K562 (cell line): ENCODE measurements at regions of chr1 and their contacts with region 1.

Region 1: DNA sequence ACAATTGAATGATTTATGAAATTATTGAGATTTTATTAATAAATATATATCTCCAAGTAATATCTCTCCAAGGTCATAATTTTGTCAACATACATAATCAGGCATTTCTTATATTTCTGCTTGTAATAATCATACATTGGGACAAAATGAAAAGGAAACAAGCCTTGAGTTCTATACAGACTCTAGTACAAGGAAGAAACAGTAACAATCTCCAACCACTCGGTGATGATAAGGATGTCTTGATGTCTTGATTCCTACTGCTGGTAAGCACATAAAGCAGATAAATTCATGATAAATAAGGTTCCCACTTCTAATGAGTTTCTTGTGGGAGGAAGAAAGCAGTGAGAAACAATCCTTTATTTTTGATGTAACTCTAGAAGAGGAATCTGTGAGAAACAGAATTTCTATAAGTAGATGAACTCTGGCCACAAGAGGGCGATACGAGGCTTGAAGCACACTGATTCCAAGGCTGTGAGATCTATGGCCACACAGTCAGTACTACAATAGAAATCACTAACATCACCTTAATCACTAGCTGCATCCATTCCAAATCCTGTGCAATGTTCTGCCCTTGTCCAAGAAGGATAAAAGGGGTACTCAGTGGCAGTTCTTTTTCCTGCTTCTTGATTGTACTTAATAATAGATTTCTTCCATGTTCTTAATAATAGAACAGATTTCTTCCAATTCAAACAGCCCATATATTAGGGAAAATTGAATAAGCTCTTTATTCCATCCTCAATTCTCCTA is 41.4 kb upstream of the LRRC8B start:
- DNase-seq: peak; percentile 42 to 85 (median 57)
- ATAC-seq: peak; percentile 96
- H3K4me3 ChIP-seq: no peak overlapping the region
- H3K27ac ChIP-seq: no peak overlapping the region
- H3K4me1 ChIP-seq: no peaks in the 10 kb centered on the region
- H3K27me3 ChIP-seq: no peaks in the 10 kb centered on the region; a peak in 1 of 5 replicates
- CTCF ChIP-seq: peak; percentile 76 to 79 (median 77)
- EP300 ChIP-seq: no peak
- POLR2A ChIP-seq: no peak
- RAD21 ChIP-seq: peak; percentile 72 to 90

Region 2: DNA sequence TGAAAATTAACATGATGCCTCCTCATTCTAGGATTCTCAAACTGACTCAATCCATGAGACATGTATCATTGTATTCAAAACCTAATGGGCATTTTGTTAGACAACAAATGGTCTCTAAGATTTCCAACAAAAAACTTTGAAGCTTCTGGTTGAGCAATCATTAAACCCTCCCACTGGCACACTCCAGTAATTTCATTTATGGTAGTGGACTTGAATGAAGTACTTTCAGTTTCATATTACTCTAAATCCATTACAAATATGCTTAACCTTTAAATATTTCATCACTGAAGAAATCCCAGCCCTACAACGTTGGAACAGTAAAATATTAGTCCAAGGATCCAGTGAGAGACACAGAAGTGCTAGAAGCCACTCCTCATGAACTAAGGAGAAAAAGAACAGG is 75.8 kb before region 1 on chr1:
- CTCF ChIA-PET with region 1: no interaction called
- POLR2A ChIA-PET with region 1: no interaction called
- in situ Hi-C with region 1: no loop called
- intact Hi-C with region 1: no loop called
- DNase-seq: no peak
- ATAC-seq: no peak
- H3K4me3 ChIP-seq: no peak overlapping the region
- H3K27ac ChIP-seq: no peak overlapping the region
- H3K4me1 ChIP-seq: no peaks in the 10 kb centered on the region
- H3K27me3 ChIP-seq: no peaks in the 10 kb centered on the region
- CTCF ChIP-seq: no peak
- EP300 ChIP-seq: no peak
- POLR2A ChIP-seq: no peak
- RAD21 ChIP-seq: no peak

Region 3: DNA sequence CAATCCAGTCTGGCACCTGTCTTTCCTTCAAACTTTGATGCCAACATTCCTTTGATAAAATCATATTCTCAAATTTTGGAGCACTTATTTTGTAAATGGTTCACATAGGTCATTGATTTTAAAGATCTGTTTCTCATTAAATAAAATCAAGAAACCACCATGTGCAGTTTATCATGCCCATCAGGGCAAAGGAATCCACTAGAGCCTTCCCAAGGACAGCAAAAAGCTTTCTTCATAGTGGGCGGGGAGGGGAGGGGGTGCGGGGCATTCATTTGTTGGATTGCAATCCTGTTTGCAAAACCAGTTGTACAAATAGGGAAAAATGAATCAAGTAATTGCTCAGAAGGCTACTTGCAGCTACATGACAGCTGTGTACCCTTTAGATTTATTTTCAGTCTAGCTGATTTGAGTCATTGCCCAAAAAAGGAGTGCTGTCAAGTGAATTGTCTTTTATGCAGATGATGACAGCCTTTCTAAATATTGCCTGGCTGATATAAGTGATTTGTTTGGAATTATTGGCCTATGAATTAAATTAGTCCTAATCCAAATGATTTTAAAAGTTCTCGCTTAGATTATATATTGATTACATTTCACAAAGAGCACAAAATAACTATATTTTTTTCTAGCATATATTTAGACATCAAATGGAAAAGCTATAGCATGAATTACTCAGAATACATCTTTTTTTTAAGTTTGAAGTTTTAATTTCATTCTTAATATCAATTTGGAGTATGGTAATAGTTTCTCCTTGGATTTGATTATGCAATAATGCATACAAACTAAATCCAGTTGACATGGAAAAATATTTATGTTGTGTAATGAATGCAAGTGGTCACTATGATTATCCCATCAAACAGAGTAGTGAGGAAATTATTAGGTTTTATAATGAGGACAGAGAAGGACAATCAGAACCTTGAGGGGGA is 64.6 kb after region 1 on chr1:
- CTCF ChIA-PET with region 1: no interaction called
- POLR2A ChIA-PET with region 1: interaction called, 4 read pairs
- in situ Hi-C with region 1: no loop called
- intact Hi-C with region 1: loop called (anchors 2 kb)
- DNase-seq: peak in 1 of 4 experiments; percentile 56
- ATAC-seq: peak; percentile 3; the same call in 1 of the 3 replicates
- H3K4me3 ChIP-seq: no peak overlapping the region
- H3K27ac ChIP-seq: peak overlapping the region; percentile 95
- H3K4me1 ChIP-seq: peaks cover 21 to 74% of the 10 kb centered on the region in 2 experiments
- H3K27me3 ChIP-seq: no peaks in the 10 kb centered on the region
- CTCF ChIP-seq: no peak
- EP300 ChIP-seq: no peak
- POLR2A ChIP-seq: no peak
- RAD21 ChIP-seq: no peak

Region 4: GRCh38 chr1:89598450-89599331 is 115.5 kb after region 1 on chr1:
- CTCF ChIA-PET with region 1: interaction called, 26 read pairs
- POLR2A ChIA-PET with region 1: no interaction called
- in situ Hi-C with region 1: loop called (anchors 5 kb)
- intact Hi-C with region 1: loop called (anchors 1 kb)
- DNase-seq: peak; percentile 49 to 56 (median 51)
- ATAC-seq: peak; percentile 89
- H3K4me3 ChIP-seq: no peak overlapping the region
- H3K27ac ChIP-seq: no peak overlapping the region
- H3K4me1 ChIP-seq: no peaks in the 10 kb centered on the region
- H3K27me3 ChIP-seq: no peaks in the 10 kb centered on the region
- CTCF ChIP-seq: peak; percentile 60 to 76 (median 69); a peak in 5 of 6 replicates
- EP300 ChIP-seq: no peak
- POLR2A ChIP-seq: peak; percentile 22
- RAD21 ChIP-seq: peak; percentile 70 to 83

Region 5: DNA sequence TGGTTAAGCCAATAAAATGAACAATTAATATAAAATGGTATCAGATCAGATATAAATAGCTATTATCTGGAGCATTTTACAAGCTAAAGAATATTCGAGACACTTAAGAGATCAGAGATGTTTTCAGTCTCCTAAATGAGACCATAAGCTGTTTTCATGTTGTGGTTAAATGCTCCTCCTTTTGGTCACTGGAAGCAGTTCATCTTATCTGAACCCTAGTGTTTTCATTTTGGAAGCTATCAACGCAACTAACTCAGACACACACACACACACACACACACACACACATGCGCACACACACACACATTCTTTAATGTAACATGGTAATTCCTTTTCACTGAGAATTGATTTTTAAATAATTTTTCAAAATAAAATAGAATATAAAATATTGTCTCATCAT is 139.7 kb after region 1 on chr1:
- CTCF ChIA-PET with region 1: interaction called, 4 read pairs
- POLR2A ChIA-PET with region 1: no interaction called
- in situ Hi-C with region 1: no loop called
- intact Hi-C with region 1: loop called (anchors 1 kb)
- DNase-seq: peak in 2 of 4 experiments; percentile 29 to 34
- ATAC-seq: peak; percentile 82
- H3K4me3 ChIP-seq: no peak overlapping the region
- H3K27ac ChIP-seq: no peak overlapping the region
- H3K4me1 ChIP-seq: 0 out of 5 replicates have a peak, but pooled peaks cover 0 to 3% of the 10 kb centered on the region in 2 experiments
- H3K27me3 ChIP-seq: no peaks in the 10 kb centered on the region
- CTCF ChIP-seq: peak; percentile 15 to 64 (median 23); a peak in 3 of 6 replicates
- EP300 ChIP-seq: no peak
- POLR2A ChIP-seq: no peak
- RAD21 ChIP-seq: peak; percentile 56 to 77

Region 6: DNA sequence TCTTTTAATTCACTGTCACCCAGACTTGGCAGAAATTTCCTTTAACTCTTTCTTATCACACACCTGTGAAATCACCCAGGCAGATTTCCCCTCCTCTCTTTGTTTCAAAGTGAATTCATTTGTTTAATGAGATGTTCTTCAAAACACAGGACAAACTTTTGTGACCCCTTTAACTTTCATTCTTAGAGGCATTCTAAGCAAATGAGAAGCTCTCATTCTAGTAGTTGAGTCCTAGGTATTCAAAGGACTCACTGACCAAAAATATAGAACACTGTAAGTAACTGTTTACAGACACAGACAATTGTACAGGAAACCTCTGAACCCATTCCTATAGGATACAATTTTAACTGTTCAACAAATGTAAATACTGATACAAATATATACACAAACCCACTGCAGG is 166.6 kb after region 1 on chr1:
- CTCF ChIA-PET with region 1: no interaction called
- POLR2A ChIA-PET with region 1: no interaction called
- in situ Hi-C with region 1: no loop called
- intact Hi-C with region 1: no loop called
- DNase-seq: no peak
- ATAC-seq: no peak
- H3K4me3 ChIP-seq: no peak overlapping the region
- H3K27ac ChIP-seq: no peak overlapping the region
- H3K4me1 ChIP-seq: peaks cover 0 to 6% of the 10 kb centered on the region in 2 experiments; a peak in 2 of 5 replicates
- H3K27me3 ChIP-seq: no peaks in the 10 kb centered on the region
- CTCF ChIP-seq: no peak
- EP300 ChIP-seq: no peak
- POLR2A ChIP-seq: no peak
- RAD21 ChIP-seq: no peak

Region 7: GRCh38 chr1:89670163-89670562 is 187.0 kb after region 1 on chr1:
- CTCF ChIA-PET with region 1: no interaction called
- POLR2A ChIA-PET with region 1: no interaction called
- in situ Hi-C with region 1: no loop called
- intact Hi-C with region 1: no loop called
- DNase-seq: no peak
- ATAC-seq: no peak
- H3K4me3 ChIP-seq: no peak overlapping the region
- H3K27ac ChIP-seq: no peak overlapping the region
- H3K4me1 ChIP-seq: peaks cover 0 to 6% of the 10 kb centered on the region in 2 experiments; a peak in 3 of 5 replicates
- H3K27me3 ChIP-seq: no peaks in the 10 kb centered on the region
- CTCF ChIP-seq: no peak
- EP300 ChIP-seq: no peak
- POLR2A ChIP-seq: no peak
- RAD21 ChIP-seq: no peak

Region 8: GRCh38 chr1:89762779-89763648 is 279.8 kb after region 1 on chr1:
- CTCF ChIA-PET with region 1: interaction called, 11 read pairs
- POLR2A ChIA-PET with region 1: no interaction called
- in situ Hi-C with region 1: loop called (anchors 10 kb)
- intact Hi-C with region 1: loop called (anchors 1 kb)
- DNase-seq: peak; percentile 88 to 92 (median 90)
- ATAC-seq: peak; percentile 100
- H3K4me3 ChIP-seq: peak overlapping the region; percentile 36
- H3K27ac ChIP-seq: peak overlapping the region; percentile 35; the same call in 1 of the 3 replicates
- H3K4me1 ChIP-seq: peaks cover 15 to 17% of the 10 kb centered on the region in 2 experiments
- H3K27me3 ChIP-seq: no peaks in the 10 kb centered on the region; a peak in 1 of 5 replicates
- CTCF ChIP-seq: peak; percentile 96 to 98 (median 97)
- EP300 ChIP-seq: peak; percentile 46; the same call in 1 of the 2 replicates
- POLR2A ChIP-seq: no peak
- RAD21 ChIP-seq: peak; percentile 98 to 99

Region 9: GRCh38 chr1:89953072-89953626 is 470.0 kb after region 1 on chr1:
- CTCF ChIA-PET with region 1: no interaction called
- POLR2A ChIA-PET with region 1: no interaction called
- in situ Hi-C with region 1: no loop called
- intact Hi-C with region 1: loop called (anchors 5 kb)
- DNase-seq: peak; percentile 37 to 84 (median 62)
- ATAC-seq: peak; percentile 97
- H3K4me3 ChIP-seq: no peak overlapping the region
- H3K27ac ChIP-seq: no peak overlapping the region; the same call in 2 of the 3 replicates
- H3K4me1 ChIP-seq: peaks cover 8 to 56% of the 10 kb centered on the region in 2 experiments; a peak in 4 of 5 replicates
- H3K27me3 ChIP-seq: no peaks in the 10 kb centered on the region
- CTCF ChIP-seq: peak; percentile 79 to 83 (median 80)
- EP300 ChIP-seq: peak; percentile 25; the same call in 1 of the 2 replicates
- POLR2A ChIP-seq: no peak
- RAD21 ChIP-seq: peak; percentile 92 to 94

Region 10: DNA sequence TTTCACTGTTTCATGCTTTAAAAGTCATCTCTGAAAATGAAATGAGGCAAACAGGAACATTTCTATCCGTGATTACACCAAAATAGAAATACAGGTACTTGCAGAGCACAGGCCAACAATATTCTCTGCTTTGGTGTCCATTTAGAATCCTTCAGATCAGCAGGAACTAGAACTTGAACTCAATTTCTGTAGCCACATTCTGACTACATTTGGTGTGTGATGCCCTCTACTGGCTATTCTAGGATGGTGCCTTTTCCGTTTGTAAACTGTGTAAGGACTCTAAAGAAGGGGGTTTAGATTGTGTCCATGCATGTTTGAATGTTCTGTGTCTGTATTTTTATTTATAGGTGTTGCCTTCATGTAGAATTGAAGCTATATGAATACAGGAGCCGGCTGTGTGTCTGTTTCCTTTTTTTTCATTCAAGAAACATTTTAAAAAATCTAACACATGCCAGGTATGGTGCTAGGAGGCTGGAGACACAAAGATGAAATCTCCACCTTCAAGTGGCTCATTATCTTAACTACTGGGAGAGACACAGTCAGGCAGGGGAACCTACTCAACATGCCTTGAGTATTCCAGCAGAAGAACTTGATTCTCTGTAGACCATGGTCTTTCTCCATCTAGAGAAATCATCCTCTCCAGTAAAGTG is 504.1 kb after region 1 on chr1:
- CTCF ChIA-PET with region 1: no interaction called
- POLR2A ChIA-PET with region 1: no interaction called
- in situ Hi-C with region 1: no loop called
- intact Hi-C with region 1: loop called (anchors 10 kb)
- DNase-seq: peak; percentile 46 to 82 (median 62)
- ATAC-seq: peak; percentile 91
- H3K4me3 ChIP-seq: no peak overlapping the region
- H3K27ac ChIP-seq: no peak overlapping the region
- H3K4me1 ChIP-seq: peaks cover 2 to 14% of the 10 kb centered on the region in 2 experiments; a peak in 4 of 5 replicates
- H3K27me3 ChIP-seq: no peaks in the 10 kb centered on the region
- CTCF ChIP-seq: peak; percentile 77 to 91 (median 88)
- EP300 ChIP-seq: 0 out of 2 replicates have a peak, but pooled peaks have one; percentile 17
- POLR2A ChIP-seq: no peak
- RAD21 ChIP-seq: peak; percentile 93 to 98